ENCODE measurements at regions of chr17 and their contacts with region 1.

Region 1: GRCh38 chr17:40086150-40087044 is 14.0 kb downstream of the NR1D1 start:
- DNase-seq: no peak
- ATAC-seq: peak; percentile 36

Region 2: DNA sequence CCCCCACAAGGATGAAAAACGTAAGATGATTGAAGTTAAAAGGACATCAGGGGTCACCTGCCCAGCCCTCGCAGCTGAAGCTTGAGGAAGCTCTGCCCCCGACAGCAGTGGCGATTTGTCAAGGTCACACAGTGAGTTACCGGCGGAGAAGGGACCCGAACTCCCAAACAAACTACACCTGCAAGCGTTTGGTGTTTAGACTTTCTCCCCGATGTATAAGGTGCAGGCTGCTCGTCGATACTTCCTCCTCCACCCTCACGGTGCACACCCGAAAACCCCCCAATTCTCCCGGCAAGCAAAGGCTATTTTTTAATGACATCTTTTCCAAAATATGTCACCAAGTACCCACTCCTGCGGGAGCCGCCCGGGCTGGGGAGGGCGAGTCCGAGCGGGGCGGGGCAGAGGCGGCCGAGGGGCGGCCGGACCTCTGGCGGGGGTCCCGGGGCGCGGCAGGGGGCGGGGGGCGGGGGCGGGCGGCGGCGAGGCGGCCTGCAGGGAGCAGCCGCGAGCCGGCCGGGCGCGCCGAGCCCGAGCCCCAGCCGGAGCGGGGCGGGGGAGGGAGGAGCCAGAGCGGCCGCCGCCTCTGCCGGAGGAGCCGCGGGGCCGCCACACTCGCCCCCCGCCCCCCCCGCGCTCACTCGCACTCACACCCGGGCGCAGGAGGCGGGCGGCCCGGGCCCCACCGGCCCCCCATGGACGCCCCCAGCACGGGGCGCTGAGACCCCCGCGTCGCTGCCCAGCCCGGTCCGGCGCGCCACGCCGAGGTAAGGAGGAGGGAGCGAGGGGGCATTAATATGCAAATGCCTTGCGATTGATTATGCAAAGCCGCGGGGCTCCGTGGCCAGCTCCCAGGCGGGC is 23.8 kb before region 1 on chr17 and contains the start of gene THRA:
- intact Hi-C with region 1: loop called (anchors 2 kb)
- DNase-seq: peak; percentile 89
- ATAC-seq: peak; percentile 69
- total RNA-seq, gene THRA: 88.3 TPM

Region 3: GRCh38 chr17:40157973-40158372 is 71.6 kb after region 1 on chr17:
- intact Hi-C with region 1: no loop called
- DNase-seq: no peak
- ATAC-seq: no peak

Region 4: DNA sequence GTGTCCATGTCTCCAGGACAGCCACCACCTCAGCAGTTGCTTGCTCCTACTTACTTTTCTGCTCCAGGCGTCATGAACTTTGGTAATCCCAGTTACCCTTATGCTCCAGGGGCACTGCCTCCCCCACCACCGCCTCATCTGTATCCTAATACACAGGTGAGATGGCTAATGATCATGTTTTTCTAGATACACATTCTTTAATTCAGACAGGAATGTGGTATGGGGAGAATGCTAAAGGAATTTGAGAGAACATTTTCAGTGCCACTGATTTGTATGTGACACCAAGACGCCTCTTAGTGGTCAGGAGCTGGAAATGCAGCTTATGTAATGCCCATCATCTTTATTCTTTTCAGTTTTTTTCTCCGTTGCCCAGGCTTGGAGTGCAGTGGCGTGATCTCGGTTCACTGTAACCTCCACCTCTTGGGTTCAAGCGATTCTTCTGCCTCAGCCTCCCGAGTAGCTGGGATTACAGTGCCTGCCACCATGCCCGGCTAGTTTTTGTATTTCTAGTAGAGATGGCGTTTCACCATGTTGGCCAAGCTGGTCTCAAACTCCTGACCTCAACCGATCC is 82.0 kb after region 1 on chr17:
- intact Hi-C with region 1: no loop called
- DNase-seq: no peak
- ATAC-seq: peak; percentile 73